ENCODE measurements at regions of chr6 and their contacts with region 1.

Region 1: DNA sequence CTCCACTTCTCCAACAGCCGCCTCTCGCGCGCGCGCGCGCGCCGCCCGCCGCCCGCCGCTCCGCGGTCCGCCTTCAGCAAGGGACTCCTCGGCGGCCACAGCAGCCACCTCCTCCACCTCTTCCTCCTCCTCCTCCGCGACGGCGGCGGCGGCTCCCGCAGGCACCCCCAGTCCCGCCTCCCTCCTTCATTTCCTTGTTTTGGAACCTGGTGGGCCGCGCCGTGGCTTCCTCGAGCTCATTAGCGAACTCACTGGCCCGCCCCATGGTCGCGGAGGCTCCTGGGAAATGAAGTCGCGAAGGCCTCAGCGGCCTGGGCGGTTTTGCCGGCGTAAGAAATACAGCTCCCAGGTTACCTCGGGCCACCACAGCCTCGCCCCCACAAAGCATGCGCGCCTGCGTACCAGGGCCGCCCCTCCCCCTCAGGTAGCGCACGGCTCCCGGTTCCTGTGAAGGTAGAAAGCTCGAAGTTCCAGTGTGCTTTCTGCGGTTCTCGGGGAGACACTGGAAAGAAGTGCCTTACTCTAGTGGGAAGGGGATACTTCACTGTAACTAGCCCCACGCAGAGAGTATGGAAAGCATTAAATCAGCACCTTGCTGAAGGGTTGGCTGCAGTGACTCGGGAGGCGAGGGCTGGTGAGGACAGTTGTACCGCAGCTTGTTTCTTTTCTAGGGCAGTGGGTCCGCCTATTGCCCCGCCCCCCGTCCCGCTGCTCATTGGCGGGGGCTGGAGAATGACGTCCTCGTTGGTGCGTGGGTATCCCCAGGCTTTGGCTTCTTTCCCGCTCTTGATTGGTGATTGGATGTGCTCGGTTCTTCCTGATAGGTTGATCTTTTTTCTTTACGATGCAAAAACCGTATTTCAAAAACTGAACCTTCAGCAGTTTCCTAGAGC is at the start of gene CDK19:
- H3K4me3 Mint-ChIP-seq: peak within 1 kb of the TSS; percentile 88
- H3K27ac Mint-ChIP-seq: peak within 1 kb of the TSS; percentile 93
- H3K4me1 Mint-ChIP-seq: peaks cover 56% of the 10 kb centered on the region
- H3K27me3 Mint-ChIP-seq: no peaks in the 10 kb centered on the region

Region 2: DNA sequence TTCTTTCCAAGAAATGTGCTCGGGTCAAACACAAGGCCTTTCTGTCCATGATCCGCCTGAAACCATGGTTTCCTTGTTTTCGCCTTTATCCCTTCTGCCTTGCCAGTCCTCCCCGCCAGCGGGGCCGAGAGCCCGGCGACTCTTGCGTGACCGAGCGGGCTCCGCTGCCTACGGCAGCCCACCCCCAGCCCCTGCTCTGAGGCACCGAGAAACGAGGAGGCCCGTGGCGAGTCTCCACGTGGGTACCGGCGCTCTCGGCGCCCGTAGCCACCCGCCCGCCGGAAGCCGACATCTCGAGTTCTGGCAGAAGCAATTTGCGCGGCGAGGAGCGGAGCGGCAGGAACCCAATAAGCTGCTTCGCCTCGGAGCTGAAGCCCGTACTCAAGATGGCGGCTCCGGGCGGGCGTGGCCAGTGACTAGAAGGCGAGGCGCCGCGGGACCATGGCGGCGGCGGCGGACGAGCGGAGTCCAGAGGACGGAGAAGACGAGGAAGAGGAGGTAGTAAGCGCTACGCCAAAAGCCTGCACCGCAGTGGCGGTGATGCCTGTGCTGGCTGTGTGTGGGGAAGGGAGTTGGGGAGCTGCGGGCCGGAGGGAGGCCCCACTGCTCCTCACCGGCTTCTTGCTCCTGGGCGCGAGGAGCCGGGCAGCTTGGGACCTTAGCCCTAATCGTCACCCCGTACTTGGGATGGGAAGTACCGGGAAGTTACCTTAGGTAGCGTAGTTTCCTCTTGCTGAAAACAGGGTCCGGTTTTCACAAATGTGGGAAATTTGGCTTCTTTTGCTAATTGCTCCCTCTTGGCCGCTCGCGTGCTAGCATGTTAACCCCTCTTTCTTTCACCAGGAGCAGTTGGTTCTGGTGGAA is 143.1 kb after region 1 on chr6 and contains the start of gene GTF3C6:
- intact Hi-C with region 1: loop called (anchors 1 kb)
- H3K4me3 Mint-ChIP-seq: peak within 1 kb of the TSS; percentile 90
- H3K27ac Mint-ChIP-seq: peak within 1 kb of the TSS; percentile 97
- H3K4me1 Mint-ChIP-seq: no peaks in the 10 kb centered on the region
- H3K27me3 Mint-ChIP-seq: no peaks in the 10 kb centered on the region

Region 3: GRCh38 chr6:110981202-110981600 is 165.7 kb after region 1 on chr6:
- intact Hi-C with region 1: no loop called
- H3K4me3 Mint-ChIP-seq: peak overlapping the region; percentile 93
- H3K27ac Mint-ChIP-seq: peak overlapping the region; percentile 97
- H3K4me1 Mint-ChIP-seq: peaks cover 39% of the 10 kb centered on the region
- H3K27me3 Mint-ChIP-seq: no peaks in the 10 kb centered on the region

Measured in dendritic cell treated with granulocyte-macrophage colony-stimulating factor and Interleukin-4, amounts not matched to agents 40 ng/mL and 50 ng/mL, for 4 days (primary cell).